Stomach (tissue), 19 donors: ENCODE measurements at regions of chr18 and their contacts with region 1.

Region 1: GRCh38 chr18:34158881-34159690 is 65.6 kb downstream of the NOL4 start:
- DNase-seq: peak; percentile 25 to 87
- H3K4me3 ChIP-seq: peak overlapping the region; percentile 26 to 45 (median 32)
- H3K27ac ChIP-seq: peak overlapping the region in 1 of 5 donors; percentile 5
- H3K4me1 ChIP-seq: peaks cover 0 to 15% (median 8%) of the 10 kb centered on the region in 4 donors
- H3K27me3 ChIP-seq: peaks cover 4 to 33% (median 15%) of the 10 kb centered on the region in 3 donors
- CTCF ChIP-seq: no peak
- EP300 ChIP-seq: no peak
- POLR2A ChIP-seq: no peak

Region 2: DNA sequence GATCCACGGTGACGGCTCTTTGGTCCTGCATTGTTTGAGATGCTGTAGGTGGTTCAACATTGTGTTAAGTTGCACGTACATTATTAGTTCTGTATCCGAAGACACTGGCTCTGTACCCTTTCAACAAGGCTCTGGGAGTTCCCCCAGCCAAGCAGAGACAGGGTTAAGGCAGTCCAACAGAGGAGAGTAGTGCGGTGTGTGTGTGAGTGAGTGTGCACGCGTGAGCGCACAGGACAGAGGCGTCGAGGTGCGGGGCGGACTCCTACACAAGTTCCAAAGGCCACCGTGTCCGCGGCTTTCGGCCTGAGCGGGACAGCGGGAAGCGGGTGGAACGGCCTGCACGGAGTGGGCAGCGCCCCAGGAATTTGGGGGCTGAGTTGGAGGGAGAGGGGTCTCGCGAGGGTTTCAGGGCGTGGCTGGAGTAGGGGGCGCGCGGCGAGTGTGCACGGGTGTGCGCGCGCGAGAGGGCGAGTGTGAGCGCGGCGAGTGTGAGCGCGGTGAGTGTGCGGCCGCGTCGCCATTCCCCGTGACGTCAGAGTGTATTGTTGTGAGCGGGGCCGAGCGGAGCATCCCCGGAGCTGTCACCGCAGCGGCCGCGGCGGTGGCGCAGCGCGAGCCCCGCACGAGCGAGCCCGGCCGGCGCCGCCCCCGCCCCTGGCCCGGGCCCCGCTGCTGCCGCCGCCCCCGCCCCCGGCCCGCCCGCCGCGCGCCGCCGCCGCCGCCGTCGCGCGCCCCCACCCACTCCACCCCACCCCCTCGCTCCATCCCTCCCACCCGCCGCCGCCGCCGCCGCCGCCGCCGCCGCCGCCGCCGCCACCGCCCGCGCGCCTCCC is 581.2 kb before region 1 on chr18 and contains the start of gene ASXL3:
- intact Hi-C with region 1: no loop called
- DNase-seq: peak; percentile 64 to 84
- H3K4me3 ChIP-seq: peak within 1 kb of the TSS; percentile 67 to 79 (median 70)
- H3K27ac ChIP-seq: peak within 1 kb of the TSS; percentile 90 to 94 (median 93)
- H3K4me1 ChIP-seq: peaks cover 3 to 42% (median 22%) of the 10 kb centered on the region in 4 donors
- H3K27me3 ChIP-seq: peaks cover 0 to 13% (median 0%) of the 10 kb centered on the region in 3 donors
- CTCF ChIP-seq: no peak
- EP300 ChIP-seq: no peak
- POLR2A ChIP-seq: no peak
- total RNA-seq, gene ASXL3: 1.2 to 8.0 (median 6.1) TPM in 4 of 5 donors, not detected in the other

Region 3: DNA sequence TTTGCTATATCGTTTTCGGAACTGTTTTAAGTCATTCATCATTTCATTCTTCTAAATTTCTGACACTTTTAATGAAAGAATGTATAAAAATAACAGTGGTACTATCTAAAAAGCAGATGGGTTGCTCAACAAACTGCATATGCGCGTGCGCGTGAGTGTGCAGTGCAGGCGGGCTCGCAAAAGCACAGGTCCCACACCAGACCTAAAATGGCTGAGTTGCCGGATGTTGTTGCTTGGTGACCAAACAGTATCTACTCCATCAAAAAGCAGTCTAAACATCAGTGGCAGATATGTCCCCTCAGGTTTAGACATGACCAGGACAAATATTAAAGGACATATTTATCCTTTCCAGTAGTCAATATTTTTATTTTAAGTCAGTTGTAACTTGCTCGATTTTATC is 60.6 kb after region 1 on chr18:
- intact Hi-C with region 1: loop called (anchors 10 kb)
- DNase-seq: peak in 1 of 2 donors; percentile 26
- H3K4me3 ChIP-seq: no peak overlapping the region
- H3K27ac ChIP-seq: no peak overlapping the region
- H3K4me1 ChIP-seq: peaks cover 29 to 31% (median 30%) of the 10 kb centered on the region in 4 donors
- H3K27me3 ChIP-seq: peaks cover 8 to 46% (median 31%) of the 10 kb centered on the region in 3 donors
- CTCF ChIP-seq: no peak
- EP300 ChIP-seq: no peak
- POLR2A ChIP-seq: no peak

Region 4: GRCh38 chr18:34352385-34353163 is 193.5 kb after region 1 on chr18:
- intact Hi-C with region 1: no loop called
- DNase-seq: peak in 1 of 2 donors; percentile 39
- H3K4me3 ChIP-seq: no peak overlapping the region
- H3K27ac ChIP-seq: no peak overlapping the region
- H3K4me1 ChIP-seq: no peaks in the 10 kb centered on the region
- H3K27me3 ChIP-seq: no peaks in the 10 kb centered on the region
- CTCF ChIP-seq: peak in 2 of 7 experiments; percentile 10 to 19
- EP300 ChIP-seq: no peak
- POLR2A ChIP-seq: no peak